Cardiac septum (tissue), 1 donor: ENCODE measurements at regions of chr11 and their contacts with region 1.

Region 1: GRCh38 chr11:134050541-134051383 is 18.1 kb upstream of the JAM3 start:
- DNase-seq: peak; percentile 80

Region 2: DNA sequence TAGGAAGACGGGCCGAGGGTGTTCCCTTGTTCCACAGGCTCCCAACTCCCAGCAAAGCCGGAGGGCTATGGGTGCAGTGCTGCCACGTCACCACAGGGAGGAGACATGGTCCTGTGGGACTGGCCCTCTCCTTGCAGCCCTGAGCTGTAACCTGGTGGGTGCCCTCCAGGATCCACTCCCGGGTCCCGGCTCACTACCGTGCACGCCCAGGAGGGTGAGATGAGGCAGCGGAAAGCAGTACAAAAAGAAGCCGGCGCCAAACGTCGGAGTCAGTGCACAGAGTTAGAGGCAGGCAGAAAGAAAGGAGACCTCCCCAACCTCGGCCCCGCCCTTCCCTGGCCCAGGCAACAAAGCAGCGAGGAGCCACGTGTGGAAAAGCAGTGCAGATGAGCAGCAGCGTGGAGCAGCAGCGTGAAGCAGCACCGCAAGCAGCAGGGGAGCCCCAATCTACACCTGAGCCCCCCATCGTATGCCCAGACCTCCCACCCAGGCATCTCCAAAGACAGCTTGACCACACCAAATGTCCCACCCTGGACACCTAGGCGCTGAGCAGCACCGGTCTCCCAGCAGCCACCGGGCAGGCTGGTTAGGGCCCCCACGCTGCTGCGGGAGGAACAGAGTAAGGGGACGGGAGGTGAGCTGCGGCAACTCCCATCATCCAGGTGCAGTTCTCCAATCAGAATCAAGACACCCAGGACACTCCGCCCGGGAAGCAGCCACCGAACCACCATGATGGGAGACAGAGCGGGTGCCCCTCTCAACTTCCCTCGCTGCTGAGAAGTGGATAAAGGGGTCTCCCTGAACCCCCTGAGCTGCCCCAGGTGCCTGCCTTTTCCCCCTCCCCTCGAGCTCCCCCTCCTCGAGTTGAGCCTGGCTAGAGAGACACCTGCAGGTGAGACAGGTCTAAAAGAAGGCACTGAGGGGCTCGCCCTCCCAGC is 122.8 kb before region 1 on chr11:
- intact Hi-C with region 1: loop called (anchors 5 kb)
- DNase-seq: peak; percentile 85

Region 3: DNA sequence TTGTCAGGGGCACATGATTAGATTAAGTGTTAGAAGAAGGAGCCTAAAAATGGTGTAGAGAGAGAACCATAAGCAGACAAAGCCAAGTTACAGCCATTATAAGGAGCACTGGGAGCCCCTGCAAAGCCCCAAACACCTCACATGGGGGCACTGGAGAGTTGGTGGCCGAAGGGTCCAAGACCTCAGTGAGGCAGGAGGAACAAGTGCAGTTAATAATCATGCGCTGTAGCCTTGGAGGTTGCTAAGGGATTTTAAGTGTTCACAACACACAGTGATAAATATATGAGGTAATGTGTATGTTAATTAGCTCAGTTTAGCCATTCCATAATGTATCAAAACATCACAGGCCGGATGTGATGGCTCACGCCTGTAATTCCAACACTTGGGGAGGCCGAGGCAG is 36.3 kb before region 1 on chr11:
- intact Hi-C with region 1: loop called (anchors 2 kb)
- DNase-seq: no peak

Region 4: GRCh38 chr11:134124660-134125451 is 74.1 kb after region 1 on chr11:
- intact Hi-C with region 1: loop called (anchors 5 kb)
- DNase-seq: no peak

Region 5: DNA sequence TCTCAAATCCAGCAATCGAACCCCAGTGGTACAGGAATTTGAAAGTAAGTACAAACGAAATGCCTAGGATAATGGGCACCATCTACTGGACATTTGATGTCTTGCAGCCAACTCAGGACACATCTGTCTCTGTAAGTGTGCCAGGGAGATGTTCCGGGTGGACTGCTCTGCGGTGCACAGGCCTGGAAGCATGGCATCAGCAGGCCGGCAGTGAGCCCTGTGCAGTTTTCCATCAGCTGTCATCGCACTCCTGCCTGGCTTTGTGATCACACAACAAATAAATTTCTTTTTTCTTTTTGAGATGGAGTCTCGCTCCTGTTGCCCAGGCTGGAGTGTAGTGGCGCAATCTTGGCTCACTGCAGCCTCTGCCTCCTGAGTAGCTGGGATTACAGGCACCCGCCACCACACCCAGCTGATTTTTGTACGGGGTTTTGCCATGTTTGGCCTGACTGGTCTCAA is 89.1 kb after region 1 on chr11:
- intact Hi-C with region 1: loop called (anchors 1 kb)
- DNase-seq: no peak